Psoas muscle (tissue), 8 donors: ENCODE measurements at regions of chr17 and their contacts with region 1.

Region 1: DNA sequence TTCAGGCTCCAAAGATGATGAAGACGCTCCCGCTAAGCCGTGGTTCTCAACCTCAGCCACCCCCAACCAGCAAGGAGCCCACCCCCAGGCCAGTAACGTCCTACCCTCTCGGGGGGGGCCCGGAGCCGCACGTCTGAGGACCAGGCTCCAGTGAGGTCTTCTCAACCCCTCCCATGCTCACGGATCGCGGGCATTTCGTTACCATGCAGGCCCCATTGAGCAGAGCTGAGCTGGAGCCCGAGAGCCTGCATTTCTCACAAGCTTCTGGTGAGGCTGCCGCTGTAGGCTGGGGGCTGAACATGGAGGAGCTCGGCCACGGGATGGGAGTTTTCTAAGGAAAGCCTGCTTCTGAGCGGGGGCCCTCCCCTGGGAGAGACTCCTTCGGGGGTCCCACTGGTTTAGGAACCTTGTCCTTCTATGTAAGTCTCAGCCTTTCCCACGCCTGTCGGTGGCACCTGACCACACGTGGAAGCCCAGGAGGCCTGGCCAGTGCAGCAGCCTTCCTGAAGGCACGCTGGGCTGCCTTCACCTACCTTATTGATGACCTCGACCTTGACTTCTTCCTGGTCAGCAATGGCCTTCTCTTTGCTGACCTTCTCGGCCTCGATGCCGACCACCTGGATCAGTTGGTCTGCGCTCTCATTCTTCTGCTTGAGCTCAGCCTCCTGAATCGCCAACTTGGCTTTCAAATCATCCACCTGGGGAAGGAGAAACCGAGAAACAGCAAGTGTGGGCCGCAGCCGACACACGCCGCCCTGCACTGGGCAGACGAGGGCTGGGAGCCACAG is 82.8 kb downstream of the PGS1 start:
- DNase-seq: no peak
- ATAC-seq: no peak
- H3K4me3 ChIP-seq: no peak overlapping the region
- H3K27ac ChIP-seq: no peak overlapping the region
- H3K4me1 ChIP-seq: no peaks in the 10 kb centered on the region
- H3K27me3 ChIP-seq: peaks cover 0 to 2% (median 0%) of the 10 kb centered on the region in 3 donors
- CTCF ChIP-seq: no peak

Region 2: GRCh38 chr17:78112518-78113226 is 348.5 kb before region 1 on chr17:
- intact Hi-C with region 1: no loop called
- DNase-seq: peak; percentile 78 to 89
- ATAC-seq: peak; percentile 62 to 79 (median 74)
- H3K4me3 ChIP-seq: no peak overlapping the region
- H3K27ac ChIP-seq: no peak overlapping the region
- H3K4me1 ChIP-seq: peaks cover 30% of the 10 kb centered on the region
- H3K27me3 ChIP-seq: peaks cover 0 to 2% (median 0%) of the 10 kb centered on the region in 3 donors
- CTCF ChIP-seq: peak; percentile 99

Region 3: DNA sequence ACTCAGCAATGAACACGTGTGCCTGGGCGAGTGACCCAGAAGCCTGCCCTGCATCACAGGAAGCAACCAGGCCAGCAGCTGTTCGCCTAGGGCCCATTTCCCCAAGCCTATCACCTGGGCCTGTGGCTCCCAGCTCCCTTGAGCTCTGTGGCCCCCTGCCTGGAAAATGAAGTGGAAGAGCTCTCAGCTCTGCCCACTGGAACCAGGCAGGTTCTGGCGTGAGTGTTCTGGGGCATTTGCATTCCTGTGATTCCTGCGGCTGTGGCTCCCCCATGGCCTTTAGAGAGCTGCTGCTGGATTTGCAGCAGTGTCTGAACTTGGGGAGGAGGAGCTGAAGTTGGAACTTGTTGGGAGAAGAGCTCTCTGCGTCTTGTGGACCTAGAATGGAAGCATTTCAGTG is 60.0 kb before region 1 on chr17:
- intact Hi-C with region 1: no loop called
- DNase-seq: no peak
- ATAC-seq: peak in 2 of 4 donors; percentile 9 to 35
- H3K4me3 ChIP-seq: no peak overlapping the region
- H3K27ac ChIP-seq: peak overlapping the region; percentile 74
- H3K4me1 ChIP-seq: peaks cover 43% of the 10 kb centered on the region
- H3K27me3 ChIP-seq: no peaks in the 10 kb centered on the region
- CTCF ChIP-seq: no peak

Region 4: GRCh38 chr17:78510141-78511075 is 49.2 kb after region 1 on chr17:
- intact Hi-C with region 1: loop called in 1 of 2 experiments (anchors 5 kb)
- DNase-seq: no peak
- ATAC-seq: no peak
- H3K4me3 ChIP-seq: no peak overlapping the region
- H3K27ac ChIP-seq: no peak overlapping the region
- H3K4me1 ChIP-seq: no peaks in the 10 kb centered on the region
- H3K27me3 ChIP-seq: peaks cover 0 to 4% (median 0%) of the 10 kb centered on the region in 3 donors
- CTCF ChIP-seq: no peak